ENCODE measurements at regions of chr15 and their contacts with region 1.

Region 1: GRCh38 chr15:92097474-92098178 is 244.1 kb downstream of the SLCO3A1 start:
- DNase-seq: no peak
- H3K4me3 ChIP-seq: no peak overlapping the region
- CTCF ChIP-seq: peak in 1 of 3 donors; percentile 50
- POLR2A ChIP-seq: no peak

Region 2: GRCh38 chr15:91535856-91536500 is 561.6 kb before region 1 on chr15:
- intact Hi-C with region 1: no loop called
- DNase-seq: no peak
- H3K4me3 ChIP-seq: no peak overlapping the region
- CTCF ChIP-seq: no peak
- POLR2A ChIP-seq: no peak

Region 3: DNA sequence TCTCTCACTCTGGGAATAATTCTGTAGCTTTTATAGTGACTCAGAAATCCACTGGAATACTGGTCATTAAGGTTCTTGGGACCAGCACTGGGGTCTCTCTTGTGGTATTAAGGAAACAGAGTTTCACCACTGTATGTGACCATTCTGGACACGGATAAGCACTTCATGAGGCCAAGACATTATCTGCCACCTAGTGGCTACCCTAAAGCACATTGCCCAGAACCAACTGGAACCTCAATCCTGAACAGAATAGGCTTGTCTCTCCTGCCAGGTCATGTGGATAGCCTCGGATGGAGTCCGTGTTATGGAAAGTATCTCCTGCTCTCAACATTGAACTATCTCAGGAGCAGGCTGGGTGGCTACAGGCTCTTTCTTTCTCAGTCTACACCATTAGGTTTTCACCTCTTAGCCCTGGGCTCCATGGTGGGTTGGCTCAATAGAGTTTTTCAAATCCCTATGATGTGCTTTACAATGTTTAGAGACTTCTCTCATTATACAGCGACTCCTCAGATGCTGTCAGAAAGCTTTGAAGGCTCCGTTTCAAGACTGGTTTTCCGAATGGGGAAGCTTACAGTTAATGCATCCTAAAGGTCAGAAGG is 128.5 kb after region 1 on chr15:
- intact Hi-C with region 1: loop called (anchors 10 kb)
- DNase-seq: no peak
- H3K4me3 ChIP-seq: no peak overlapping the region
- CTCF ChIP-seq: no peak
- POLR2A ChIP-seq: no peak

Region 4: GRCh38 chr15:92499731-92500530 is 402.3 kb after region 1 on chr15:
- intact Hi-C with region 1: loop called (anchors 10 kb)
- DNase-seq: no peak
- H3K4me3 ChIP-seq: no peak overlapping the region
- CTCF ChIP-seq: no peak
- POLR2A ChIP-seq: no peak